Activated T-helper 2 cell treated with anti-CD3 and anti-CD28 coated beads, Interferon-gamma antibody, Interleukin-2, Interleukin-4, amounts not matched to agents 10 μg/mL and 5 μg/mL and 100 μg/mL, durations not matched to agents 14 hours and 24 hours and 36 hours (primary cell): ENCODE measurements at regions of chr16 and their contacts with region 1.

Region 1: DNA sequence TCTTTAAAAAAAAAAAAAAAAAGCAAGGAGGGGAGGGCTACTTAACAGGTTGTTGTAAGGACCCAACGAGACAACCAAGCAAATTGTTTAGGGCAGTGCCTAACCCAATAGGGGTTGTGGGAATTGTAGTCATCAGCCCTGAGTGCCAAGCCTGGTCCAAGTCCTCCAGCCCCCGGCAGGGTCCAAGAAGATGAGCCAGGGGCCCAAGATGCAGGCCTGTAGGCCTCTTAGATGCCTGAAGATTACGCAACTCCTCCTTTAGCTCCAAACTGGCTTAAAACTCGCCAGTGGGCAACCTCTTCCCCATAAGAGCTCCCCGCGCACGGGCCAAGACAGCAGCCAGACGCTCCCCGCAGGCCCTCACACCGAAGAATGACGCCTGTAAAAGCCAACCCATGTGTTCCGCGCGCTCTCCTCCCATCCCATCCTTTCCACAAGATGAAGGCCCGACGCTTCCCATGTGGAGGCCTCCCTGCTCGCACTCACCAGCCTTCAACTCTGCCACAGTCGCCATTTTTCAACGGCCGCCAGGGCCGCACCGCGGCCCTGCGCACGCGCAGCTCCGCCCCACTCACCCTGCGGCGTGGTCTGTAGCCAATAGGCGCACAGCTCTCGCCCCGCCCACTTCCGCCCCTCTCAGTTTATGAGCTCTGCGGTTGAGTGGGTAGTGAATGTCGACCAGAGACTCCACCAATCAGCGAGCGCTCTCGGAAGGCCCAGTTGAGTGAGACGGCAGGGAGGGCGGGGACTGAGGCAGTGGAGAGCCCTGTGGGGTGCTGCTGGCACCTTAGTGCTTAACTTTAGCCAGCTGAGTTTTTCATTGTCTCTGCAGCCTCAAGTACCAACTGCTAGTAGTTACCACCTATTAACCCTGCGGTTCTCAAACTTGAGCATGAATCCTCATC is at the start of gene CEP20:
- DNase-seq: peak; percentile 100
- H3K4me3 Mint-ChIP-seq: peak within 1 kb of the TSS; percentile 98
- H3K27ac Mint-ChIP-seq: peak within 1 kb of the TSS; percentile 97
- H3K4me1 Mint-ChIP-seq: peaks cover 30% of the 10 kb centered on the region
- H3K27me3 Mint-ChIP-seq: no peaks in the 10 kb centered on the region
- total RNA-seq, gene CEP20: 39.4 and 39.7 TPM in 2 replicates

Region 2: DNA sequence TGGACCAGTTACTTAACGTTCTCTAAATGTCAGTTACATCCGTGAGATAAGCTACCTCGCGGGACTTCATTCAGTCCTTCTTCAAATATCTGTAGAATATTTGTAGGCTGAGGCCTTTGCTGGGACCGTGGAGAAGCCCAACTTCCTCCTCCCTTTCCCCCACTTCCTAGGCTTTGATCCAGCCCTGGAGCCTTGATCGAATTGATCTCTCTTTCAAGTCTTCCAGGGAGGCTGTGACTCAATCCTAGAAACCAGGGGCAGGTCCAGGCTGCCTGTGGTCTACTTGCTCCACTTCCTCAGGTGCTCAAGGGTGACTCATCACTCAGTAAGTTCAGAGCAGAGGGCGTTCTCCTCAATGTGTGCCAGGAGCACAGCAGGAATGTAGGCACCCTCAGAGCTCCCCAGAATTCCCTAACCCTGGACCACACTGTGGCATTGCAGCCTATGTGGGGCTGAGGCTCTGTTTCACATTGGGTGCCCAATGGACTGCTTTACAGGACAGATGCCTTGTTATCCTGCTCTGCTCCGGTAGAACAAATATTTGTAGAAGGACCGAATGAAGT is 11.3 kb after region 1 on chr16:
- intact Hi-C with region 1: loop called (anchors 1 kb)
- DNase-seq: peak; percentile 52
- H3K4me3 Mint-ChIP-seq: no peak overlapping the region
- H3K27ac Mint-ChIP-seq: peak overlapping the region; percentile 70
- H3K4me1 Mint-ChIP-seq: peaks cover 35% of the 10 kb centered on the region
- H3K27me3 Mint-ChIP-seq: no peaks in the 10 kb centered on the region

Region 3: DNA sequence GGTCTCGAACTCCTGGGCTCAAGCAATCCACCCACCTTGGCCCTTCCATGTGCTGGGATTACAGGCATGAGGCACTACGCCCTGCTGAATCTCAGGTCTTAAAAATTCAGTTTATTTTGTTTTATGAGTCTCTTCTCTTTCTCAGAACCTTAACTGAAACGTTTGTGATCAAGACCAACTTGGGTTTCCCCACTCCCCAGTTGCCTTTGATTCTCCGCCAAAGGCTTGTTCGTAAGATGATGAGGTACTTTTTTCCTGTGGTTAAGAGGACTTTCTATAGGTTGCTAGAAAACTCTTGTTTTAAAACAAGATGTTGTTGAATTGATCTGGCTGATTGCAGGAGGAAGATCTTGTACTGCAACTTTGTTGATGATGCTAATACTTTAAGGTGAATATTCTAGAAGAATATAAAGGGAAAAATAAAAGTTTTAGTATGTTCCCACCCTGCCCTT is 72.8 kb after region 1 on chr16:
- intact Hi-C with region 1: loop called (anchors 2 kb)
- DNase-seq: peak; percentile 74
- H3K4me3 Mint-ChIP-seq: peak overlapping the region; percentile 73
- H3K27ac Mint-ChIP-seq: peak overlapping the region; percentile 98
- H3K4me1 Mint-ChIP-seq: peaks cover 68% of the 10 kb centered on the region
- H3K27me3 Mint-ChIP-seq: no peaks in the 10 kb centered on the region

Region 4: DNA sequence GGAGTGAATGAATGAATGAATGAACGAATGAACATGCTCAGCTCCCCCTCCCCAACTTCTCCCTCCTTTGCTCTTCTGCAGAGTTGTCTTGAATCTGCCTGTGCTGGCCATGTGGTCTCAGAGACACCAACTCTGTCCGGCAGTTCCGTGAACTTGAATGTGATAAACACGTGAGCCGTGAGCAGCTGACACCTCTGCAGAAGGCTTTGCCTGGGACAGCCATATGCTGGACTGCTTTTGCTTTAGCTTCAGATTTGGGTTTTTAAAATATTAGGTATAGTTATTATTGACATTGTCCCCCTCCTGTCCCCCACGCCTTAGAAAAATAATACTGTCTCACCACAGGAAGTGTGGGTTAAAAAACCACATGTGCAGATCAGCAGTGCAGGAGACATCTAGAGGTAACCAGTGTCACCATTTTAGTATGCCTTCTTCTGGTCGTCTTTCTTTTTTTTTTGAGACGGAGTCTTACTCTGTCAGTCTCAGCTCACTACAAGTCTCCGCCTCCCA is 144.9 kb after region 1 on chr16:
- intact Hi-C with region 1: loop called (anchors 5 kb)
- DNase-seq: peak; percentile 19
- H3K4me3 Mint-ChIP-seq: no peak overlapping the region
- H3K27ac Mint-ChIP-seq: peak overlapping the region; percentile 73
- H3K4me1 Mint-ChIP-seq: peaks cover 25% of the 10 kb centered on the region
- H3K27me3 Mint-ChIP-seq: no peaks in the 10 kb centered on the region

Region 5: GRCh38 chr16:16127469-16128116 is 239.3 kb after region 1 on chr16:
- intact Hi-C with region 1: loop called (anchors 10 kb)
- DNase-seq: peak; percentile 64
- H3K4me3 Mint-ChIP-seq: no peak overlapping the region
- H3K27ac Mint-ChIP-seq: no peak overlapping the region
- H3K4me1 Mint-ChIP-seq: peaks cover 3% of the 10 kb centered on the region
- H3K27me3 Mint-ChIP-seq: no peaks in the 10 kb centered on the region